GM10248 (cell line): ENCODE measurements at regions of chr2 and their contacts with region 1.

Region 1: DNA sequence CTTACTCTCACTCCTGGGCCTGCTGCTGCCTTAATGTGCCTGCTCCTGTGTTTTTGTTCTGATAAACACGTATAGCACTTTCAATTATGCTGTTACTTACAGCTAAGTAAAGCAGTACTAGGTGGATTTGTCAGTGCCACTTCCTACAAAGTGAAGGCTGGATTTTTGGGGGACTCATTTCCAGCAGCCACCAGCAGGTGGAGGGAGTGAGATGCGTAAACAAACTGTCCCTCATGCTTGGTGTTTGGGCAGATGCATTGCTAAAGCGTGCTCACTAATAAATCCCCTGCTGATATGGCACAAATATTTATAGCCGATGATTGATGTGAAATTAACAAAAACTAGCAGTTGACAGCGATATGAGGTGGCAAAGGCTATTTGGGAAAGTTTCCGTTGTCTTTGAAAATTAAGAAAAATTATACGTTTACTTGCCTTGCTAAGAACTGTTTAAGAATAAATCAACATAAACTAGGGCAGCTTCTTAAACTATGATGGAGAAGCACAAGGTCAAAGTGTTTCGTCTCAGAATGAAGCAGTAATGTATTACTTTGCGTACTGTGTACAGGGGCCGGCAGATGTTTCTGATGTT is 101.7 kb downstream of the AGAP1 start:
- DNase-seq: peak; percentile 64
- CTCF ChIP-seq: peak; percentile 73

Region 2: GRCh38 chr2:235098736-235099494 is 496.6 kb before region 1 on chr2:
- CTCF ChIA-PET with region 1: no interaction called
- POLR2A ChIA-PET with region 1: no interaction called
- DNase-seq: no peak
- CTCF ChIP-seq: no peak

Region 3: DNA sequence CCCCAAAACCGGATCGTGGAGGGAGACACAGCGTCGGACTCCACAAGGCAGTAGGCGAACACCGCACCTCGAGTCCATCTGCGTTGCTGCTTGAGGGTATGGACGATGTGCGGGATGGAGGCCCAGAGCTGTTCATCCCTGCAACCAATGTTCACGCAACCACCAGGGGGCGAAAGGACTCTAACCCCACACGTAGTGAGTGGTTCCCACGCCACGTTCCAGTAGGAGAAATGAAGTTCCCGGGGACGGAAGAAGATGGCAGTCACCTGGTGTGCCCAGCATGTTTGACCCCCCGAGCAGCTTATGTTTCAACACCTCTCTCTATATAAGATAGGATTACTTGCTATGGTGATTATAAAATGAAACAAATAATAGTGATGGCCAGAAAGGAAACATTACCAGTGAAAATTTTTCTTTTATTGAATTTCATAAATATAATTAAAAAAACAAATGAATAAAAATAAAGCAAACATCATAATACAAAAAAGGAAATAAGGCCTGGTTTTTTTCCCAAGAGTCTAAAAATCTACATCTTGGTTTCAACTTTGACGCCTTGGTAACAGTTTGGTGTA is 459.4 kb before region 1 on chr2:
- CTCF ChIA-PET with region 1: interaction called, 46 read pairs
- POLR2A ChIA-PET with region 1: no interaction called
- DNase-seq: peak; percentile 49
- CTCF ChIP-seq: peak; percentile 57